Activated CD4-positive, alpha-beta T cell treated with anti-CD3 and anti-CD28 coated beads, Interleukin-2, amount 10 ng/mL, durations not matched to agents 24 days and 14 days (primary cell): ENCODE measurements at regions of chr1 and their contacts with region 1.

Region 1: DNA sequence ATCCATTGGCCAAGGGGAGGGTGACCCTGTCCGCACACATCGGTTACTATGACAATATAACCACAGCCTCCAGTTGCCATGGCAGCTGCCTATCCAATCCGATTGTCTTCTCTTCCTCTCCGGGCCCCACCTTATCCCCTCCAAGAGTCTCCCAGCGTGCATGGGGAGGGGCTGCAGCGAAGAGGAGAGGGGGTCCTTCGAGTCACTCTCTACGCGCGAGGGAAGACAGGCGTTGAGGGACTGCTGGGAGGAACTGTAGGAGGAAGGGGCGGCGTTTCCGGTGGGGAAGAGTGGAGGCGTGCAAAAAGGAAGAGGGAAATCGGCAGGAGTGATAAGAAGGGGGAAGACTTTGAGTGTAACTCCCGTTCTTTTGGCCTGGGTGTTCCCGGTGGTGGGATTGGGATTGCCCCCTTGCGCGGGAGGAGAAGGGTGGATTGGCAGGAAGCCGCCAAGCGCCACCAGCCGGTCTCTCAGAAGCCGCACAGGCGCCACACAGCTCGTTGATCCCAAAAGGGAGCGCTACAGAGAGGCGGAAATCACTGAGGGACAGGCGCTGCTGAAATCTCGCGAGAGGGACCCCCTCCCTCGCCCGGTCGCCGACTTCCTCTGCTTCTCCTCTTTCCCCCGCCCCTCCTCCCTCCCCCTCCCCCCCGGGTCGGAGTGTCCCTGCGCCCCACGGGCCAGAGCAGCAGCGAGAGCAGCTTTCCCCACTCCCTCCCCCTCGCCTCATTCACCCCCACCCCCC is 384 bp upstream of the SMG7 start:
- DNase-seq: peak; percentile 97
- H3K4me3 Mint-ChIP-seq: peak overlapping the region; percentile 92
- H3K27ac Mint-ChIP-seq: peak overlapping the region; percentile 100
- H3K4me1 Mint-ChIP-seq: peaks cover 29% of the 10 kb centered on the region
- H3K27me3 Mint-ChIP-seq: no peaks in the 10 kb centered on the region

Region 2: DNA sequence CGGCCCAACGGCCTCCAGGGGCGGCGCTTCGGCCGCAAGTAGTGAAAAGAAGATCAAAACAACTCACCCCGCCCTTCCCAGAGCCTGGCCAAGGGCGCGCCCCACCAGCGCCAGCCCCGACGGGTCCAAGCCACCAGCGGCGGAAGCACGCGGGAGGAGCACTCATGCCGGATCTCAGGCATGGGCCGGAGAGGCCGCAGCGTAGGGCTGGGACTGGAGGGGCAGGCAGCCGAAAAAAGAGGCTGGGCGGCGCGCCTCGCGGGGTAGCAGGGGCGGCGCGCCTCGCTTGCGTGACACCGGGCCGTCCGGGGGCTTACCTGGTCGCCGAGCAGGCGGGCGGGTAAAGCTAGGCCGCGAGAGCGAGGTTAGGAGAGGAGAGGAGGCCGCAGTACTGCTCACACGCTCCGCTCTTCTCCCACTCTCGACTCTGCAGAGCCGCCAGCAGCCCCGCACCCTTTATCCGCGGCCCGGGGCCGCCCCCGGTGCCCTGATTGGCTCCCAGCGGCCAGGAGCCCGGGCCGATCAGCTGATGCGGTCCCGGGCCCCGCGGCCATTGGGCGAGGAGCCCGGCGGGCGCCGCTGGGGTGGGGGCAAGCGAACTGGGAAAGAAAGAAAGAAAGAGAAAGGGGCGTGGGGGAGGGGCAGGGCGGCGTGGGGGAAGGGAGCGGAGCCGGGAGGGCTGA is 1080.4 kb before region 1 on chr1 and contains the start of gene GLUL:
- intact Hi-C with region 1: loop called (anchors 5 kb)
- DNase-seq: peak; percentile 94
- H3K4me3 Mint-ChIP-seq: peak within 1 kb of the TSS; percentile 96
- H3K27ac Mint-ChIP-seq: peak within 1 kb of the TSS; percentile 93
- H3K4me1 Mint-ChIP-seq: peaks cover 40% of the 10 kb centered on the region
- H3K27me3 Mint-ChIP-seq: peaks cover 18% of the 10 kb centered on the region
- total RNA-seq, gene GLUL: 78.1 and 80.2 TPM in 2 replicates

Region 3: DNA sequence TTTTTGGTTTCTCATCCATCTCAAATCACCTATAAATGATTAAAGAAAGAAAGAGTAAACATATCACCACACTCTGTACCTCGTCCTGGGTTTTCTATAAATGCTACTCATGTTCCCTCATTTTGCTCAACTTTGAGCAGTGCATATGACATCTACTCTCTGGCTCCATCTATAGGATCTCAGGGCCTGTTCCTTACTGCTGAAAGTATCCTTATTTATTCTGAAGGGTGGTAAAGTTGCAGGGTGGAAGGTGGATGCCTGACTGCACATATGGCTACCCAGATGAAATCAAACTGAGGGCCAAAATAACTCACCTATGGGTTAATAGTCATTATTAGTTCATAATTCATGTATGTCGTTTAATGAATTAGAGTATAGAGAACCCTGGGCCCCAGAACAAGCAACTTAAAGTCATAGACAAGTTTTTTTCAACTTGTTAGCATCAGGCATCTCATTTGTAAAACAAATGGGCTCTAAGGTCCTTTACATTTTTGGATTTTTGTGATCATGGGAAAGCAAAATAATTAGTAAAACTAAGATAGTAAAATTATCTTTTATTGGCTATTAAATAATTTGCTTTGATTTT is 71.8 kb after region 1 on chr1:
- intact Hi-C with region 1: loop called (anchors 1 kb)
- DNase-seq: peak; percentile 77
- H3K4me3 Mint-ChIP-seq: no peak overlapping the region
- H3K27ac Mint-ChIP-seq: peak overlapping the region; percentile 12
- H3K4me1 Mint-ChIP-seq: peaks cover 12% of the 10 kb centered on the region
- H3K27me3 Mint-ChIP-seq: no peaks in the 10 kb centered on the region

Region 4: DNA sequence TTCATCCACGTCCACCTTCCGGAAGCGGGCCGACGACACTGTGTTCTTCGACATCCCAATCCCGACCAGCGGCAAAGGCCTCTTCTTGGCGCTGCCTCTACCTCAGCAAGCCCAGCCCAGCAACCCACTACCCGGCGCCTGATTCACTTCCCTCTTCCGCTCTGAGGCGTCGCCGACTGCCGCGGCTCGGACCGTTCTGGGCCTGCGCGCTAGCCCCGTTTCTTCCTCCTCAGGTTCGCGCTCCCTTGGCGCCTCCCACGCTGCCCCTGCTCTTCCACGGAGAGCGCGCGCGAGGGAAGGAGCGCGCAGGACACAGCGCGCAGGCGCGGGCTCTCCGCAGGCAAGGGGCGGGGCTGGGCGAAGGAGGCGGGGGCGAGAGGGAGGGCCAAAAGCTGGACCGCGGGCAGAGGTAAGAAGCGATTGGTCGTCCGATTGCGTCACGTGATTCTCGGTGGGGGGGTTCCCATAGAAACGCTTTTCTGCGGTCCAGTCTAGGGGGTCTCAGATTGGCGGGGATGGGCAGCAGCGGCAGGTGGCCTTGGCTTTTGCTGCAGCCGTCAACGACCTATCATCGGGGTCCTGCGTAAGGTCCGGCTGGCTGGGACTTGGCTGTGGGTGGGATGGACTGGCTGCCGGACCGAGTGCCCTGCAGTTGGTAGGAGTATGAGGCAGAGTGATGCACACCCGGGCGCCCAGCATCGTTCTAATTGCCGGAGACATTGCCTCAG is 163.9 kb after region 1 on chr1 and contains the start of gene ARPC5:
- intact Hi-C with region 1: loop called (anchors 1 kb)
- DNase-seq: peak; percentile 99
- H3K4me3 Mint-ChIP-seq: peak within 1 kb of the TSS; percentile 98
- H3K27ac Mint-ChIP-seq: peak within 1 kb of the TSS; percentile 100
- H3K4me1 Mint-ChIP-seq: peaks cover 29% of the 10 kb centered on the region
- H3K27me3 Mint-ChIP-seq: peaks cover 11% of the 10 kb centered on the region
- total RNA-seq, gene ARPC5: 144 and 149 TPM in 2 replicates

Region 5: GRCh38 chr1:184036517-184036949 is 564.6 kb after region 1 on chr1:
- intact Hi-C with region 1: loop called (anchors 5 kb)
- DNase-seq: peak; percentile 64
- H3K4me3 Mint-ChIP-seq: peak overlapping the region; percentile 69
- H3K27ac Mint-ChIP-seq: no peak overlapping the region
- H3K4me1 Mint-ChIP-seq: peaks cover 14% of the 10 kb centered on the region
- H3K27me3 Mint-ChIP-seq: peaks cover 71% of the 10 kb centered on the region

Region 6: DNA sequence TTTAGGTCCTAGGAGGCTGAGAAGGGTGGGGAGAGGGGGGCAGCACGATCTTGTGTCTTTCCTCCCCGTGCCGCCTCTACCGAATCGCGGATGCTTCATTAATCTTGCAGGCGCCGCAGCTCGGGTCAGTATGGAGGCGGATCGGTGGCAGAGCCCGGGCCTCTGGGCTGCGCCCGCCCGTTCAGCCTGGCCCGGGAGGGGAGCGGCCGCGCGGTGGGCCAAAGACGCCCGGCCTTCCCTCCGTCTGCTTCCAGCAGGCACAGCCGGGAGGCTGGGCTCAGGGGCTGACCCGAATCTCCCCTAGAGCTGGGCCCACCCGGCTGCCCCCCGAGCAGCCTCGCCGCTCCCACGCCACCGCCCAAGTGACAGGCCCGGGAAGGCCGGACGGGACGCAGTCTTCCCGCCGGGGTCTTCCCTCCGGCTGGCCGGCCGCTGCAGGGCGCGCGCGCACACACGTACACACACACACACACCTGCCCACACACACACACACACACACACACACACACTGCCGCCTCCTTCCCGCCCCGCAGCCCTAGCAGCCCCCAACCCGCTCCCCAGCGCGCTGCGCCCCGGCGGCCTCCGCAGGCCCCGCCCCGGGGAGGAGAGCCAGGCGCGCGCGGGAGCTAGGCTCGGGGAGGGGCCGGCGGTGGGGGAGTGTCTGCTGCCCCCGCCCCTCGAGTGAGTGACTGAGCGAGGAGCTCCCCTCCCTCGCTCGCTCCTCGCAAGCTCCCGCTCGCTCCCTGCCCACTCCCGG is 914.6 kb after region 1 on chr1 and contains the start of gene C1orf21:
- intact Hi-C with region 1: loop called (anchors 5 kb)
- DNase-seq: peak; percentile 94
- H3K4me3 Mint-ChIP-seq: peak within 1 kb of the TSS; percentile 84
- H3K27ac Mint-ChIP-seq: peak within 1 kb of the TSS; percentile 83
- H3K4me1 Mint-ChIP-seq: peaks cover 16% of the 10 kb centered on the region
- H3K27me3 Mint-ChIP-seq: peaks cover 81% of the 10 kb centered on the region
- total RNA-seq, gene C1orf21: 1.8 and 2.5 TPM in 2 replicates